ENCODE measurements at regions of chr16 and their contacts with region 1.

Region 1: GRCh38 chr16:740764-741505 is at the start of gene CIAO3:
- DNase-seq: peak; percentile 90 to 94
- ATAC-seq: peak; percentile 95 to 98 (median 98)
- H3K4me3 ChIP-seq: peak within 1 kb of the TSS; percentile 93
- H3K27ac ChIP-seq: peak within 1 kb of the TSS; percentile 77
- H3K4me1 ChIP-seq: peaks cover 12% of the 10 kb centered on the region
- H3K27me3 ChIP-seq: peaks cover 0 to 10% (median 0%) of the 10 kb centered on the region in 3 donors
- CTCF ChIP-seq: peak; percentile 90
- total RNA-seq, gene CIAO3: 12.3 to 25.9 (median 23.6) TPM

Region 2: DNA sequence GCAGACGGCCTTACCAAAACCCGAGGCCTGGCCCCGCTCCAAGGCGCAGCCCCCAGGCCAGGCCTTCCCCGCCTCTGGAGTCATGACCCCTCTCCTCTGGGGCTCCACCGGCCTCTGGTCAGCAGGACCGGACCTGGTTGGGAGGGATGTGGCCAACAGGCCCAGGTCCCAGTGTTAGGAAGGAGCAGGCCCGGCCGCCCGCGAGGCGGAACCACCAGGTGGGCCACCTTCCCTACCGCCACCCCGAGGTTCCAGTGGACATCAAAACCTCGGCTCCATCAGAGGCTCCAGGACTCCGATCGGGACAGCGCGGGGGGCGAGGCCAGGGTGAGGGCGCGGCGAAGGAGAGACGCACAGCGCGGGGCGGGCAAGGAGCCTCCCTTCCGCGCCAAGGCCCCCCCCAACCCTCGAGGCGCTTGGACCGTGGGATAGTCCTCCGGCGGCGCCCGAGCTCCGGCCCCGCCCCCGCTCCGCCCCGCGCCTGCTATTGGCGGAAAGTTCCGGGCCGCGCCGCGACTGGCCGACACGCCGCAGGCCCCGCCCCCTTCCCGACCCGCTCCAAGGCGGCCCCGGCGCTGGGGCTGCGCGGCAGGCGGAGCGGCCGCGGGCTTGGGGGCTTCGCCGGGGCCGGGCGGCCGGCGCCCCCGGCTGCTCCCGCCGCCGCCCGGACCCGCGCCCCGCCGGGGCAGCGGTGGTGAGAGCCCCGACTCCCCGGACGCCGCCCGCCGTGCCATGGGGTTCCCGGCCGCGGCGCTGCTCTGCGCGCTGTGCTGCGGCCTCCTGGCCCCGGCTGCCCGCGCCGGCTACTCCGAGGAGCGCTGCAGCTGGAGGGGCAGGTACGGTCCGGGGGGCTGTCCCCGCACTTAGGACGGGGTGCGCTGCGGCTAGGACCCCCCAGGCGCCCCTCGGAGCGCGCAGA is 26.1 kb before region 1 on chr16 and contains the start of gene METRN:
- intact Hi-C with region 1: loop called in 1 of 2 experiments (anchors 1 kb)
- DNase-seq: peak; percentile 95 to 96
- ATAC-seq: peak; percentile 90 to 91 (median 90)
- H3K4me3 ChIP-seq: peak within 1 kb of the TSS; percentile 74
- H3K27ac ChIP-seq: no peak within 1 kb of the TSS
- H3K4me1 ChIP-seq: peaks cover 12% of the 10 kb centered on the region
- H3K27me3 ChIP-seq: peaks cover 0 to 18% (median 9%) of the 10 kb centered on the region in 3 donors
- CTCF ChIP-seq: no peak
- total RNA-seq, gene METRN: 19.6 to 25.8 (median 22.8) TPM

Region 3: DNA sequence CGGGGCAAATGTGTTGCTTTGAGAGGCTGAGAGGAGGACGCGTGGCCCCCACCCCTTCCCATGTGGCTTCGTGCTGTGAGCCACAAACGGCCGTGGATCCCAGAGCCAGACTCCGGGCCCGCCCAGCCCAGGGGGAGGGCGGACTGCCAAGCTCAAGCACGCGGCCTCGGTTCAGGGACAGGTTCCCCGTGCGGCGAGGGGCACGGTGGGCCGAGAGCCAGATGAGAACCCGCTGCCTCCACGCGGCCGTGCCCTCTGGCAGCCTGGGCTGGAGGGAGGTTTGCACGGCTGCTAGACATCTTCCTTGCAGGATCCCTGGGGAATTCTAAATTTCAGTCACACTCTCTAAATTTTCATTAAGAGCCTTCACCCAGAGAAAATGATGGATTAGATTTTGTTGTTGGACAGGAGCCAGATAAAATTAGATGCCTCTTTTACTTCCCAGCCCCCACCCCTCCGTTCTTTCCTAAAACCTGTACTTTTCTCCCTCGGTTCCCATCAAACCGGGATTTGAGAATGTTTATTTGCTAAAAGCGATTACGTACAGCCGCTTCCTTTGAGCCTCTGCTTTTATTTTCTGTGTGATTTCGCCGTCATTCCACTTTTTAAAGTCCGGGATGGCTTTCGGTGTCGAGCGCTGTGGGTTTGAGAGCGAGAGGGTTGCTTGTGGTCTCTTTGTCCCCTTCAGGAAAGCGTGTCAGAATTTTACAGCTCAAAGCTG is 84.6 kb after region 1 on chr16:
- intact Hi-C with region 1: no loop called
- DNase-seq: peak in 1 of 2 donors; percentile 46
- ATAC-seq: no peak
- H3K4me3 ChIP-seq: no peak overlapping the region
- H3K27ac ChIP-seq: no peak overlapping the region
- H3K4me1 ChIP-seq: no peaks in the 10 kb centered on the region
- H3K27me3 ChIP-seq: peaks cover 0 to 38% (median 22%) of the 10 kb centered on the region in 3 donors
- CTCF ChIP-seq: no peak